Activated CD4-positive, alpha-beta T cell treated with anti-CD3 and anti-CD28 coated beads, Interleukin-2, amount 10 ng/mL, durations not matched to agents 7 days and 5 days (primary cell): ENCODE measurements at regions of chr14 and their contacts with region 1.

Region 1: DNA sequence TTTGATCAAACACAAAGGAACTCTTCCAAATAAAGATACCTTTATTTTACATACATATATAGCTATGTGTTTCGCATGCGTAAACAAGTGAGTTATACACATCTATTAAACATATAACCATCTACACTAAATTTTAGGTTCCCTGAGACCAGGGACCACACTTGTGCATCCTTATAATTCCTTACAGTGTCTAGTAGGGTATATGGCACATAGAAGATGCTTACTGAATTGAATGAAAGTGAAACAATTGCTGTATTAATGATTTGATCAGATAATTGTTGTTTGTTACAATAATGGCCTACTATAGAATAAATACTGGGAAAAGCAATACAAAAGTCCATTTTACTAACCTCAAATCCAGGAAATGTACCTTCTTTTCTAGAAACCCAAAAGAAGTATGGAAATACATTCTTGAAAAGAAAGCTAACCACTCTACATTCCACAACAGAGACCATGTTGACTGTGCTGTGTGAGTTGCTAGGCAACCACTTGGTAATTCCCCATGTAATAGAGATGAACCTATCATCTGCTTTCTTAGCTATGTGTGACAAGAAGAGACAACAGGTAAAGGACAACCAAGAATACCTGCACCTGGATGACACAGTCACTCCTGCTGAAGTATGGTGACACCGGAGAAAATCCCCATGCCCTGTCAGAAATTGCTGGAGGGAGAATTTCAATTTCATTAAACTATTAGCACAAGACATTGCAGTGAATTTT is 11.9 kb upstream of the CIPC start:
- DNase-seq: peak; percentile 27
- H3K4me3 Mint-ChIP-seq: no peak overlapping the region
- H3K27ac Mint-ChIP-seq: peak overlapping the region; percentile 42
- H3K4me1 Mint-ChIP-seq: peaks cover 14% of the 10 kb centered on the region
- H3K27me3 Mint-ChIP-seq: peaks cover 2% of the 10 kb centered on the region

Region 2: DNA sequence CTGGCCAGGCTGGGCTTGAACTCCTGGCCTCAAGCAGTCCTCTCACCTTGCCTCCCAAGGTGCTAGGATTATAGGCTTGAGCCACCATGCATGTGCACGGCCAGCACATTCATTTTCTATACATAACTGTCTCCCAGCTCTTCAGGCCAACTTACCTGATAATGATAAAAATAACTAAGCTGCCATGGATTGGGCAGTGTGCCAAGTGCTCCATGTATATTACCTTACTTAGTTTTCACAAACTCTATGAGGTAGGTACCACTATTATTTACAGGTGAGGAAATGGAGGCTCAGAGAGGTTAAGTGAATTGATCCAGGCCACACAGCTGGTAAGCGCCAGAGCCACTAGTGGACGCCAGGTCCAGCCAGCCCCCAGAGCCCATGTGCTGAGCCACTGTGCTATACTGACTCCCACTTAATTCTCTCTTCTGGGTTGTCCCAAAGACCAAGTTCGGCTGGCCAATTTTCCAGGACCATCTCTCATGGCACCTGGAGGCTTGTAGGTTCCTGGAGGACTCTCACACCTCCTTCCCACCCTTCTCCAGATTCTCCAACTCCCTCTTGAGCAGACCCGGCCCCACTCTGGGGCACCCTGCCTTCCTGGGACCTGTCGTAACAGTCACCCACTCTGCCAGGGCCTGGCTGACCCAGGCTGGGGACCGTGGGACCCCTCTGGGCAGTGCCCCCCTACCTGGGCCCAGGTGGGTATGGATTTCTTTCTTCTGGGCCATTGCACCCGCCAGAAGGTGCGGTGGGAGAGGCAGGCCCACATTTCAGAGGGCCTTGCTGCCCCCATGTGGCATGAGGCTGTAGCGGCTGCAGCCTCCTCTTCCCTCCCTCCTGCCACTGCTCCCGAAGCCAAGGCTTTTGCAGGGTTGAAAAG is 18.3 kb before region 1 on chr14:
- CTCF ChIA-PET with region 1: interaction called, 10 read pairs
- POLR2A ChIA-PET with region 1: no interaction called
- DNase-seq: peak; percentile 61
- H3K4me3 Mint-ChIP-seq: no peak overlapping the region
- H3K27ac Mint-ChIP-seq: no peak overlapping the region
- H3K4me1 Mint-ChIP-seq: peaks cover 2% of the 10 kb centered on the region
- H3K27me3 Mint-ChIP-seq: peaks cover 5% of the 10 kb centered on the region

Region 3: GRCh38 chr14:77076113-77076631 is 10.0 kb before region 1 on chr14:
- CTCF ChIA-PET with region 1: interaction called, 11 read pairs
- POLR2A ChIA-PET with region 1: no interaction called
- DNase-seq: no peak
- H3K4me3 Mint-ChIP-seq: no peak overlapping the region
- H3K27ac Mint-ChIP-seq: no peak overlapping the region
- H3K4me1 Mint-ChIP-seq: no peaks in the 10 kb centered on the region
- H3K27me3 Mint-ChIP-seq: no peaks in the 10 kb centered on the region